ENCODE measurements at regions of chr7 and their contacts with region 1.

Region 1: DNA sequence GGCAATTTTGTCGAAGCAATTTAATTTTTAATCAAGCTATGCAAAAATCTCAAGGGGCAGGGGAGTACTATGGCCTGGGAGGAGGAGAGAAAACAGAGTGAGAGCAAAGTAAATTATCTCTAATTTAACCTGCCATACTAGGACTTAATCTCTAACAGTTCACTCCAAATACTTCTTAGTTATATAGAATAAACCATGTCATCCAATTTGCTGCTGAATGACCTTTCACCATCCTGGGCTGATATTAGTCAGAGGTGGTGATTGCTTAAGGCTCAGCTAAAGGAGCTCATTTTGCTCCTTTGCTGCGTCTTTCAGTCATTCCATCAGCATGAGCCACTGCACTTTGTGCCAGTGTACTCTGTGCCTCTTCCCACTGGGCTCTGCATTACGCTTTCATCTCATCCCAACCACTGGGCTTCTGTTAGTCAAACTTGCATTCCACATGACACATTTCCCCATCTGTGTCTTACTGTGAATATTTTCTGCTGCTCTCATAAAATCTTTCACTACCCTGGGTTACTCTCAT is 84.2 kb downstream of the CD36 start:
- DNase-seq: peak; percentile 85 to 99
- H3K4me3 ChIP-seq: peak overlapping the region; percentile 20
- H3K27ac ChIP-seq: peak overlapping the region; percentile 89
- H3K4me1 ChIP-seq: peaks cover 38% of the 10 kb centered on the region
- H3K27me3 ChIP-seq: no peaks in the 10 kb centered on the region
- CTCF ChIP-seq: no peak

Region 2: DNA sequence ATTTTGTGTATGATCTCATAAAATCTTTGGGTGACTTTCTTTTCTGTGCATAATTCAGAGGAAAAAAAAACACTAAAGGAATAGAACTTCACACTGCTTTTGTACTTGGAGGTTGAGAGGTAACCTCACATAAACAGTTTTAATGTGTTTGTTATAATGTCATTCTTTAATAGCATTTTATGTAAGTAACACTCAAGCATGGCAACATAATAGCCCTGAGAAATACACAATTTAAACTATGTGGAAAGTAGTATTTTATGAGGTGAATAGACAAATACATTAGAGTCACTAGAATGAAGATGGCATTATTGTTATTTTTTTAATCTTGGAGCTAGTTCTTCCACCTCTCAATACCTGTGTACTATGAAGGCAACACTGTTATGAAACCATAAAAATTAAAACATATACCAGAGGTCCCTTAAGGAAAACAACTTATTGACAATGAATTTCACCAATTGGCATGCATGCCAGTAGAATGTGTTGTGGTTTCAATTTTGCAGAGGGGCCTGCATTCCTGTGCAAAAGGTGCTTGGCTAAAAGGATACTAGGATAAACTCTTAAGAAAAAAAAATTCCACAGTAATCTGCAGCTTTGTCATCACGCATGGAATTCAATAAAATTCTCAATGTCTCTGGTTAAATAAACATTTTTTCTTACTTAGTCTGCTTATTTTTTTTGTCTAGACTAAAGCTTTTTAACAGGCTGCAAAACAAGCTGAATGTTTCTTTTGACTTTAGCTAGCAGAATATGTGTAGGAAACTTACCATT is 18.3 kb after region 1 on chr7:
- CTCF ChIA-PET with region 1: interaction called, 3 read pairs
- POLR2A ChIA-PET with region 1: no interaction called
- intact Hi-C with region 1: loop called (anchors 2 kb)
- DNase-seq: peak in 1 of 2 experiments; percentile 52
- H3K4me3 ChIP-seq: no peak overlapping the region
- H3K27ac ChIP-seq: no peak overlapping the region
- H3K4me1 ChIP-seq: no peaks in the 10 kb centered on the region
- H3K27me3 ChIP-seq: no peaks in the 10 kb centered on the region
- CTCF ChIP-seq: no peak

Region 3: DNA sequence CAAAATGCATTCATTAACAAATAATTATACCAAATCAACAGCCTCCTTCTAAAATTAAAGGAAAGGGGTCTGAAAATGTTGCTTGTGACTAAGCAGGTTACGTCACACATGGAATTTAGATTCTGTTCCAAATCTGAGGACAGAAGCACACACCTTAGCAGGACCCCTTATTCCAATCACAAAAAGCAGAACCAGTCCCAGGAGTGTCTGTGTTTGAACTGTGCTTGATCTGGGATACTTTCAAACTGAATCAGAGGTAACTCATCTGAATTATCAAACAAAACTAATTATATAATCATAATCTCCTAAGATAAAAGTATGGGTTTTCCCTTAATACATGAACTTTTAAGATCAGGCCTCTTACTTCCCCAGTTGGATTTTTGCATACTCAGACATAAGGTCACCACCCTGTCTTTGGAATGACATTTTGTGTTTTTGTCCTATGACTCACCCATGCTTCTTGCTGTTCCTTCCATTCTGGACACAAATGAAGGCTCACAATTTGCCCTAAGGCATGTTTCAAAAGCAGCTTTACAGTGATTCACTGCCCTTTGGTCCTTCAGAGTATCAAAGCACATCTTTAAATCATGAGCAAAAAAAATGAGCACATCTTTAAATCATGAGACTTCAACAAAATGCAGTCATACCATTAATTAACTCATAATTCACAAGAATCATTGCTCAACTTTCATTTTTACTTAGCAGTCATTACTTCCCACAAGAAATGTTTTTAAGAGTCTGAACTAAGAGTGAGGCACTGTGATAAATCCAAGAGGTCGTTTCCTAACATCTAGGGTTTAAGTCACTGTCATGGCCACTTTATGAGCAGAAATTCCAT is 160.7 kb after region 1 on chr7:
- CTCF ChIA-PET with region 1: no interaction called
- POLR2A ChIA-PET with region 1: no interaction called
- intact Hi-C with region 1: loop called (anchors 1 kb)
- DNase-seq: peak; percentile 66 to 99
- H3K4me3 ChIP-seq: no peak overlapping the region
- H3K27ac ChIP-seq: peak overlapping the region; percentile 82
- H3K4me1 ChIP-seq: peaks cover 32% of the 10 kb centered on the region
- H3K27me3 ChIP-seq: no peaks in the 10 kb centered on the region
- CTCF ChIP-seq: no peak

Region 4: GRCh38 chr7:81482600-81483186 is 760.0 kb after region 1 on chr7:
- CTCF ChIA-PET with region 1: interaction called, 8 read pairs
- POLR2A ChIA-PET with region 1: interaction called, 10 read pairs
- intact Hi-C with region 1: no loop called
- DNase-seq: no peak
- H3K4me3 ChIP-seq: no peak overlapping the region
- H3K27ac ChIP-seq: no peak overlapping the region
- H3K4me1 ChIP-seq: no peaks in the 10 kb centered on the region
- H3K27me3 ChIP-seq: no peaks in the 10 kb centered on the region
- CTCF ChIP-seq: peak; percentile 76

Measured in PC-9 (cell line).